ENCODE measurements at regions of chr5 and their contacts with region 1.

Region 1: GRCh38 chr5:90873033-90873517 is 314.5 kb downstream of the ADGRV1 start:
- DNase-seq: peak; percentile 40
- H3K4me3 Mint-ChIP-seq: no peak overlapping the region
- H3K27ac Mint-ChIP-seq: no peak overlapping the region
- H3K4me1 Mint-ChIP-seq: peaks cover 23% of the 10 kb centered on the region
- H3K27me3 Mint-ChIP-seq: peaks cover 33% of the 10 kb centered on the region

Region 2: DNA sequence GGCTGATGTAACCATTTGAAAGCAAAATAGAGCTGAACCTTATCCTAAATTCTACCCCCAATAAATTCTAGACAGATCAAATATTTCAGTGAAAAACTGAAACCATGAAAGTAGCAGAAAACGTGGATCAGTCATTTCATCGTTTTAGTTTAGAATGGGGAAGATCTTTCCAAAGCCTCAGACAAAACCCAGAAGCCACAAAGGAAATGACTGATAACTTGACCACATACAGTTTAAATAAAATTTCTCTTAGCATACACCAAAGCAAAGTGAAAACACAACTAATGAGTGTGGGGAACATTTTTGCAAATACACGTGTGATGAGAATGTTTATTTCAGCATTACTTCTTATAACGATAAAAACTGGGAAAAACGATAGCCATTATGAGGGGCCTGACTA is 29.6 kb before region 1 on chr5:
- CTCF ChIA-PET with region 1: no interaction called
- POLR2A ChIA-PET with region 1: no interaction called
- intact Hi-C with region 1: loop called (anchors 1 kb)
- DNase-seq: no peak
- H3K4me3 Mint-ChIP-seq: no peak overlapping the region
- H3K27ac Mint-ChIP-seq: no peak overlapping the region
- H3K4me1 Mint-ChIP-seq: peaks cover 6% of the 10 kb centered on the region
- H3K27me3 Mint-ChIP-seq: peaks cover 35% of the 10 kb centered on the region

Region 3: DNA sequence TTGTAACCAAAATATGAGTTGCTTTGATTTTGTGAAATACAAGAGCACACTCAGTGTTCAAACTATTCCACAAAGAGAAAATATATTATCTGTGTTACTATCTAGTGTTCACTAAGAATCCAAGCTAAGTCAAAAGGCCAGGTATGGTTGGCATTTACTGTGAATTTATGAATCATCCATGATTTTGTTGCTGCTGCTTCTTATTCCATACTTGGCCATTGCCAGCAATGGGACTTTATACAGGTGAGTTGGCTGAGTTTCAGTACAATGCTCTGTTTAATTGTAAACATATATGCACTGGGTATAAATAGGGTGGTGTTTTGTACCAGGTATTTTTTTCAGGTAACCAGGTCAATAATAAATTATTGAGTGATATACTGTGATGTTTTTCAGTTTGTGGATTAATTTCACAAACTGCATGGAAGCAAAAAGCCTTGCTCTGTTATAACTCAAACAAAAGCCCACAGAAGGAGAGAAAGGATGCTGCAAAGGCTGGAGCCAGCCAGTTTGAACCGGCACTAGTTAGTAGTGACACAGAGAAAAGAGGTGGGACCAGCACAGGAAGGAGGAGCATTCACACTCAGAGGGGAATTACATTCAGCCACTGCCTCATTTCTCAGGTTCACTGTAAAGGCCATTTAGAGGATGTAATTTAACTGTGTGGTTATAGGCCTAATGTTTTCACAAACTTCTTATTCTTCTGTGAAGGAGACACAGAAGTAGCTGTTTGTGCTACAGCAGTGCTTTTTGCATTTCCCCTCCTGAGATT is 67.3 kb after region 1 on chr5:
- CTCF ChIA-PET with region 1: no interaction called
- POLR2A ChIA-PET with region 1: no interaction called
- intact Hi-C with region 1: loop called (anchors 5 kb)
- DNase-seq: peak; percentile 75
- H3K4me3 Mint-ChIP-seq: no peak overlapping the region
- H3K27ac Mint-ChIP-seq: peak overlapping the region; percentile 32
- H3K4me1 Mint-ChIP-seq: peaks cover 7% of the 10 kb centered on the region
- H3K27me3 Mint-ChIP-seq: no peaks in the 10 kb centered on the region

Region 4: DNA sequence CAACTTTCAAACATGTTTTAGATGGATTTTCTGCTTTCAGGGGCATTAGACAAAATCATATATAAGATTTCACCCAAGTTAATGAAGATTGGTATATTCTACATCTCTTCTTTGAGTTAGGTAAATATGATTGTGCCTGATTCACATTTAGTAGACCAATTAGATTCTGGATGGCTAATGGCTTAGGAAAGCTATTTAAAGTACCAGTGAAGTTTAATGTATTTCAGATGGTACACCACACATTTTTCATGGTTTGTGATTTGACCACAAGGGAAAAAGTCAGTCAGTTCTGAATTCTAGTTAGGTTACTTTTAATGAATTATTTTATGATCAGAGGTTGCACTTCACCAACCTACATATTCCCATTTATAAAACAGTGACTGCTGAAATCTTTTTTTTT is 95.2 kb after region 1 on chr5:
- CTCF ChIA-PET with region 1: no interaction called
- POLR2A ChIA-PET with region 1: no interaction called
- intact Hi-C with region 1: no loop called
- DNase-seq: no peak
- H3K4me3 Mint-ChIP-seq: no peak overlapping the region
- H3K27ac Mint-ChIP-seq: no peak overlapping the region
- H3K4me1 Mint-ChIP-seq: peaks cover 3% of the 10 kb centered on the region
- H3K27me3 Mint-ChIP-seq: peaks cover 33% of the 10 kb centered on the region

Region 5: DNA sequence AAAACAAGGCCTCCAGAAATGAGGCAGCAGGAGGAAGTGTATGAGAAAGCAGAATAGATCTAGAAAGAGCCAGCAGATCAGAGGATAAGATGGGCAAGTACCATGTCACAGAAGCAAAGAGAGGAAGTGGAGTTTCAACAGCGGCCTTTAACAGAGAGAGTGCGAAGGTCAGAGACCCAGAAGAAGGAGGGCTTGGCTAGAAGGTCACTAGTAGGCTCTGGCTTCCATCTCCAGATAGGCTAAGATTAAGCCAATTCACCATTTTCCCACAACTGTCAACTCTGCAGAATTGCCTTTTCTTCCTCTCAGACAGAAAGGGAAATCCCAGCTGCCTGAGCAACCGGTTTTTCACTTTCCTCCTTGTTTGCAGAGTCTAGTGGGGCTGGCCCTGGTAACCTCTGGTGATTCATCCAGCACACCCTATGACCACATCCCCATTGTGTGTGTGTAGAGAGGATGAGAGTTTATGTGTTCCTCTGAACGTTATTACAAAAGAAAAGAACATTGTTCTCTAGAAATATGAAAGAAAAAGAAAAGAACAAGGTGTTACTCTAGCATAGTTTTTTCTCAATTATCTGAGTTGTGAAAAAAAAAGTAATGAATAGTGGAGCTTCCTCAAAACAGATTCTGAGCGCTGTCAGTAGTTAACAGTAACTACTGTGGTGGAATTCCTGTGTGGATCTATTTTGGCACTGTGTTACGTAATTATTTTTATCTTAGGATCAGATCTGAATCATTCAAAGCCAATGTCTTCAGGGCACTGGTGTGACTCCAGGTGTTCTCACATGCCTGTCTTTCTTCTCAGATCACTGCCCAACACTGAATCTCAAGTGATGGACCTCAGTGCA is 289.7 kb after region 1 on chr5:
- CTCF ChIA-PET with region 1: no interaction called
- POLR2A ChIA-PET with region 1: no interaction called
- intact Hi-C with region 1: loop called (anchors 2 kb)
- DNase-seq: peak; percentile 86
- H3K4me3 Mint-ChIP-seq: no peak overlapping the region
- H3K27ac Mint-ChIP-seq: peak overlapping the region; percentile 67
- H3K4me1 Mint-ChIP-seq: peaks cover 19% of the 10 kb centered on the region
- H3K27me3 Mint-ChIP-seq: no peaks in the 10 kb centered on the region

Region 6: DNA sequence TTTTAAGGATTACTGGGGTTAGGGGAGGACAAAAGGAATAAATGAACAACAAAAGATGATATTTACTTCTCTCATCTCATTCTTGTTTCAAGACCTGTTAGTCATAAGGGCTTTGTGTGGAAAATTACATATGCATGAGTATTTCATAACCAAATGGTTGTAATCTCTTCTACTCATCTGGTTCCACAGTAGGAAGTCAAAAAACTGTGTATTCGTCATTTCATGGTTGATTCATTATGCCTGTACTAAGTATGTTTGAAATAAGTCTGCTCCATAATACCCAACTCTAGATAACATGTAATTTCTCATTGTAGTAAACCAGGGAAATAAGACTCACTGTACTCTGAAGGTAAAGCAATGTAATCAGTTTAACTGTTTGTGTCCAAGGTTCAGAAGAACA is 297.2 kb after region 1 on chr5:
- CTCF ChIA-PET with region 1: no interaction called
- POLR2A ChIA-PET with region 1: no interaction called
- intact Hi-C with region 1: loop called (anchors 1 kb)
- DNase-seq: no peak
- H3K4me3 Mint-ChIP-seq: no peak overlapping the region
- H3K27ac Mint-ChIP-seq: peak overlapping the region; percentile 4
- H3K4me1 Mint-ChIP-seq: peaks cover 14% of the 10 kb centered on the region
- H3K27me3 Mint-ChIP-seq: peaks cover 9% of the 10 kb centered on the region

Measured in activated CD4-positive, alpha-beta memory T cell treated with anti-CD3 and anti-CD28 coated beads for 36 hours (primary cell).